Mucosa of descending colon (tissue), 3 donors: ENCODE measurements at regions of chr19 and their contacts with region 1.

Region 1: DNA sequence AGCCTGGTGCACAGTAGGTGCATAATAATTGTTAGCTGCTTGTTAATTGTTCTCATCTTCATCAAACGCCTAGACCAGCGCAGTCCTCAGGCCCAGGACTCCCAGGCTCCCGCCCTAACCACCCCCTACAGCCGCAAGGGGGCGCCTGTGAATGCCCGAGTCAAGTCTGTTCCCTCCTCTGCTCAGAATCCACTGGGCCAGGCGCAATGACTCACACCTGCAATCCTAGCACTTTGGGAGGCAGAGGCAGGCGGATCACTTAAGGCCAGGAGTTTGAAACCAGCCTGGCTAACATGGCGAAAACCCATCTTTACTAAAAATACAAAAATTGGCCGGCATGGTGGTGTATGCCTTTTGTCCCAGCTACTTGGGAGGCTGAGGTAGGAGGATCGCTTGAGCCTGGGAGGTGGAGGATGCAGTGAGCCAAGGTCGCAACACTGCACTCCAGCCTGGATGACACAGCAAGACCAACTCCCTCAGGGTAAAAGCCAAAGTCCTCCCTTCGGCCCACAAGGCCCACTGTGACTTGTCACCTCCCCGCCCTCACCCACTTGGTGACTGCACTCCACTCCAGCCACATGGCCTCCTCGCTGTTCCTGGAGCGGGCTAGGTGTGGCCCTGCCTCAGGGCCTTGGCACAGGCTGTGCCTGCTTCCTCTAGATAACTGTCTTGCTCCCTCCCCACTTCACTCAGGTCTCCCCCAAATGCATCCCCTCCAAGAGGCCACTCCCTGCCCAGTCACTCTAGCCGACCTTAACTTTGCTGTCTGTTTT is 9.1 kb downstream of the ZNF653 start:
- DNase-seq: peak in 2 of 3 donors; percentile 74 to 79
- ATAC-seq: peak; percentile 92
- H3K4me3 ChIP-seq: no peak overlapping the region
- H3K4me1 ChIP-seq: no peaks in the 10 kb centered on the region
- CTCF ChIP-seq: peak; percentile 55

Region 2: GRCh38 chr19:11551603-11552235 is 55.1 kb after region 1 on chr19:
- intact Hi-C with region 1: no loop called
- DNase-seq: peak in 1 of 3 donors; percentile 56
- ATAC-seq: peak; percentile 43
- H3K4me3 ChIP-seq: no peak overlapping the region
- H3K4me1 ChIP-seq: no peaks in the 10 kb centered on the region
- CTCF ChIP-seq: no peak

Region 3: GRCh38 chr19:11578258-11579142 is 81.9 kb after region 1 on chr19:
- intact Hi-C with region 1: loop called in 1 of 2 experiments (anchors 10 kb)
- DNase-seq: peak; percentile 72 to 81 (median 75)
- ATAC-seq: peak; percentile 76
- H3K4me3 ChIP-seq: no peak overlapping the region
- H3K4me1 ChIP-seq: peaks cover 2% of the 10 kb centered on the region
- CTCF ChIP-seq: no peak